ENCODE measurements at regions of chr4 and their contacts with region 1.

Region 1: DNA sequence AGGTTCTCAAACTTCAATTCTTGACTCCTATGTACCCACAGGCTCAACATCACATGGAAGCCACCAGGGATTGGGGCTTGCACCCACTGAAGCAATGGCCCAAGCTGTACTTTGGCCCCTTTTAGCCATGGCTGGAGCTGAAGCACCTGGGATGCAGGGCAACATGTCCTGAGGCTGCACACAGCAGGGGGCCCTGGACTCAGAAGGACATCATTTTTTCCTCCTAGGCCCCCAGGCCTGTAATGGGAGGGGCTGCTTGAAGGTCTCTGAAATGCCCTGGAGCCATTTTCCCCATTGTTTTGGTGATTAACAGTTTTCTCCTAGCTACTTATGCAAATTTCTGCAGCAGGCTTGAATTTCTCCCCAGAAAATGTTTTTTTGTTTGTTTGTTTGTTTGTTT is 465.1 kb upstream of the PCDH10 start:
- DNase-seq: no peak
- H3K4me3 ChIP-seq: no peak overlapping the region
- H3K27ac ChIP-seq: no peak overlapping the region
- H3K4me1 ChIP-seq: no peaks in the 10 kb centered on the region
- H3K27me3 ChIP-seq: no peaks in the 10 kb centered on the region
- CTCF ChIP-seq: no peak
- POLR2A ChIP-seq: no peak

Region 2: DNA sequence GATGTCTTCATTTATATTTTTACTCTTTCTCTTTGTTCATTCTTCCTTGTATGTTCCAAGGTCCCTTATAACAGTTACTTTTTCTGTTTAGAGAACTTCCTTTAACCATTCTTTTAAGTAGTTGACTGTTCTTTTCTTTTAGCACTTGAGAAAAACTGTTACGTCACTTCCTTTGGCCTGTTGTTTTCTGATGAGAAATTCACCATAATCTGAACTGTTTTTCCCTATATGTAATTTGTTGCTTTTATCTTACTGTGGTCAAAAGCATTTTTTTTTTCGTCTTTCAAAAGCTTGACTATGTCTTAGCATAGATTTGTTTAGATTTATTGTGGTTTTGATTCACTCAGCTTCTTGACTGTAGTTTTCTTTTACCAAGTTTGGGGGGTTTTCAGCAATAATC is 1195.2 kb before region 1 on chr4:
- intact Hi-C with region 1: loop called (anchors 5 kb)
- DNase-seq: no peak
- H3K4me3 ChIP-seq: no peak overlapping the region
- H3K27ac ChIP-seq: no peak overlapping the region
- H3K4me1 ChIP-seq: no peaks in the 10 kb centered on the region
- H3K27me3 ChIP-seq: no peaks in the 10 kb centered on the region
- CTCF ChIP-seq: no peak
- POLR2A ChIP-seq: no peak

Region 3: GRCh38 chr4:132605551-132605950 is 78.4 kb before region 1 on chr4:
- intact Hi-C with region 1: no loop called
- DNase-seq: no peak
- H3K4me3 ChIP-seq: no peak overlapping the region
- H3K27ac ChIP-seq: no peak overlapping the region
- H3K4me1 ChIP-seq: no peaks in the 10 kb centered on the region
- H3K27me3 ChIP-seq: no peaks in the 10 kb centered on the region
- CTCF ChIP-seq: no peak
- POLR2A ChIP-seq: no peak

Region 4: DNA sequence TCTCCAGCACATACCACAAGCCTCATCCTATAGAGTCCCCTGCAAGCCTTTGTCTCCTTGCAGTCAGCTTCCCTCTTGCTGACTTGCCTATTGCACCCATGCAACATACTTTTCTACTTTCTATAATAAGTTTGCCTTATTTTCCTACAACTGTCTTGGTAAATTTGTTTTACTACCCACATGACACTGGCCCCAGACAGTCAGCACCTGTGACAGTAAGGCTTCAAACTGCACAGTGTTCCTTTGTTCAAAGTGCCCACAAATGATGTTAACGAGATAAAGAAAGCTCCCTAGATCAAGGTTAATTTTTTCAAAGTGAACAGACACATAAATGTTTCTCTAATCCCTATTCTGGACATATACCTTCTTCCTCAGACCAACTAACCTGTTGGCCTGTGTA is 64.0 kb before region 1 on chr4:
- intact Hi-C with region 1: no loop called
- DNase-seq: no peak
- H3K4me3 ChIP-seq: no peak overlapping the region
- H3K27ac ChIP-seq: no peak overlapping the region
- H3K4me1 ChIP-seq: no peaks in the 10 kb centered on the region
- H3K27me3 ChIP-seq: no peaks in the 10 kb centered on the region
- CTCF ChIP-seq: no peak
- POLR2A ChIP-seq: no peak

Measured in breast epithelium (tissue), 4 donors.